ENCODE measurements at regions of chr11 and their contacts with region 1.

Region 1: GRCh38 chr11:44434191-44434590 is 124.3 kb upstream of the ALX4 start:
- DNase-seq: no peak
- ATAC-seq: no peak
- H3K4me3 ChIP-seq: no peak overlapping the region
- H3K27ac ChIP-seq: no peak overlapping the region
- H3K4me1 ChIP-seq: peaks cover 0 to 22% (median 8%) of the 10 kb centered on the region in 9 donors
- H3K27me3 ChIP-seq: peaks cover 0 to 11% (median 0%) of the 10 kb centered on the region in 7 donors
- CTCF ChIP-seq: no peak

Region 2: DNA sequence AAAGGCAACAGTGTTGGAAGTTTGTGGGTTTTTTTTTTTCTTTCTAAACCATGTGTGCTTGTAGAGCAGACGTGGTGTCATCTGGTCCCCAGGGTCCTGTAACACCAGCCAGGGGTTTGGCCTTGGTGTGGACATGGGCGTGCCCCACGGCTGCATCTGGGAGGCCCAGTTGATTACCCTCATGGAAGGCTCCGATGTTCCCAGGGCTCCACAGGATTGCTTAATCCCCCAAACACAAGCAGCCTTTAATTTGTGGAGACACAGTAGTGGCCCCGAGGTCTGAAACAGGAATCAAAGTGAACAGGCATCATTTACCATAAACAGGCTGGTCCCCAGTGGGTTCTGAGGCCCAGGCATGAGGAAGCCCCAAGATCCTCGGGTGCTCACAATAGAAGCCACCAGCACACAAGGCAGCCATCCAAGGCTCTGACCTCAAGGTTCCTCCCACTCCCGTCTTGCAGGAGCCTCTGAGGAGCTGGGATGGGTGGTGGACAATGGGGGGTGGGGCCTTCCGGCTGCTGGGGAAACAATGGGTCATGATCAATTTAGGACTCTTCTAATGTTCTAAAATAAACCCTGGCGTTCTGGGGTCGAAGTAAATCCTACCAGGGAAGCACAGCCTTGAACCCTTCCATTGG is 16.2 kb after region 1 on chr11:
- intact Hi-C with region 1: loop called in 1 of 10 experiments (anchors 2 kb)
- DNase-seq: peak; percentile 54 to 80
- ATAC-seq: peak; percentile 27 to 90 (median 82)
- H3K4me3 ChIP-seq: no peak overlapping the region
- H3K27ac ChIP-seq: peak overlapping the region in 7 of 10 donors; percentile 27 to 74 (median 70)
- H3K4me1 ChIP-seq: peaks cover 0 to 40% (median 10%) of the 10 kb centered on the region in 9 donors
- H3K27me3 ChIP-seq: no peaks in the 10 kb centered on the region
- CTCF ChIP-seq: no peak